ENCODE measurements at regions of chr7 and their contacts with region 1.

Region 1: DNA sequence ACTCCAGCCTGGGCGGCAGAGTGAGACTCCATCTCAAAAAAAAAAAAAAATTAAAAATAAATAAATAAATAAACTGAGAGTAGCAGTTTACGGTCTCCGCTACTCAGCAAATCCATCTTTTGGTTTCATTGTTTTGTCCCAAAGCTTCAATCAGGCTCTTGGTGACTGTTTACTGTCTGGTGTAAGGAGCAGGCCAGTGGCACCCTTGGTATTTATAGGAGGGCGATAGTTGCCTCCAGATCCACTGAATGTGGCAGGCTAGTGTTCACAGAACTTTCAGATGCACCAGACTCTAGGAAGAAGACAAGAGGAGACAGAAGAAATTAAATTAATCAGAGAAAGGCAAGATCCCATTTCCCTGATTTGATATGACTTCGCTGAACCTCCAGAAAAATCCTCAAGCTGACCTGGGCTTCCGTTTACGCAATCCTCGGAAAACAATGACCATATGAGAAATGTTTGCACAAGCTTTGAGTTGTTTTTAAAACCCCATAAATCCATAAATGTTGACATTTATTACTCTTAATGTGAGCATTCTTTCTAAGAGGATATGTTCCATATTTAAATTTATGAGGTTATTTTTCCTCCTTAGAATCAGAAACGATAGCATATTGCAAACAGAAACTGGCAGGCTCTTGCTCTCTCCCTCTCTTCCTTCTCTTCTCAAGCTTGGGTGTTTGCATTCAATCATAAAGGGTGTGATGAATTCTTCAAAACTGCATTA is 7.1 kb upstream of the MUC3A start:
- DNase-seq: peak; percentile 93
- ATAC-seq: peak; percentile 94
- H3K4me3 ChIP-seq: peak overlapping the region; percentile 29; the same call in 1 of the 2 replicates
- H3K27ac ChIP-seq: peak overlapping the region; percentile 83
- H3K4me1 ChIP-seq: peaks cover 12% of the 10 kb centered on the region
- H3K27me3 ChIP-seq: no peaks in the 10 kb centered on the region
- CTCF ChIP-seq: no peak

Region 2: DNA sequence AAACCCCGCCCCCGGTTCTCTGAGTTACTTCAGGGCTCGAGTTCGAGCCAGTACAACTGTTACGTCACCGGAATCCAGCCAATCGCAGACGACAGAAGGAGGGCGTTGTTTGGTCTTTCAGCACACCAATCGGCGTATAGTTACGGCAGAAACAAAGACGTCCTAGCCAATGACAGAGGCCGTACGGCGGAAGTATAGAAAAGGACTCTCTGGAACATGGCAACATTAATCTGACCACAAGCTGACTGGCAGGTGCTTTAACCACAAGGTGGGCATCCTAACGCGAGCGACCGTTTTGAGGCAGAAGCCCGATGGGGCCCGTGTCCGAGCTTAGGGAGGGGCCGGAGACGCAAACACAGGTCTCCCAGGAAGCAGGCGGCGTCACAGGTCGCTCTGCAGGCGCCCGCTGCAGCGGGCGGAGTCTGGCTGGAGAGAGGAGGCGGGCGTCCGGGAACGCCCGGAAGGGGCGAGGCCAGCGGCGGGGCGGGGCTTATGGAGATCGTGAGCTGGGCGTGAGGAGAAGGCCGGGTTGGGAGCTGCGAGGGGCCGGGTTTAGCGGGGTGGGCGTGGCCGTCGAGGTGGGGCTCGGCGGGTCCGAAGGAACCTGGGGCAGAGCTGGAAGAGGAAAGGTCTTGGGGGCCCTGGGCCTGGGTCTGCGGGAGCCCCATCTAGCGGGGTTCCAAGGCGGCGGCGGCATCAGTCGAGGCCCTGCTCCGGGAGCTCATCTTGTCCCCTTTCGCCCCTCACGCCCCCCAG is 330.1 kb before region 1 on chr7 and contains the start of gene MOSPD3:
- CTCF ChIA-PET with region 1: no interaction called
- POLR2A ChIA-PET with region 1: interaction called, 11 read pairs
- intact Hi-C with region 1: no loop called
- DNase-seq: peak; percentile 99
- ATAC-seq: peak; percentile 96
- H3K4me3 ChIP-seq: peak within 1 kb of the TSS; percentile 70
- H3K27ac ChIP-seq: peak within 1 kb of the TSS; percentile 23; the same call in 1 of the 2 replicates
- H3K4me1 ChIP-seq: peaks cover 7% of the 10 kb centered on the region; the same call in 1 of the 2 replicates
- H3K27me3 ChIP-seq: no peaks in the 10 kb centered on the region
- CTCF ChIP-seq: no peak
- total RNA-seq, gene MOSPD3: 9.4 and 19.4 TPM in 2 replicates

Region 3: DNA sequence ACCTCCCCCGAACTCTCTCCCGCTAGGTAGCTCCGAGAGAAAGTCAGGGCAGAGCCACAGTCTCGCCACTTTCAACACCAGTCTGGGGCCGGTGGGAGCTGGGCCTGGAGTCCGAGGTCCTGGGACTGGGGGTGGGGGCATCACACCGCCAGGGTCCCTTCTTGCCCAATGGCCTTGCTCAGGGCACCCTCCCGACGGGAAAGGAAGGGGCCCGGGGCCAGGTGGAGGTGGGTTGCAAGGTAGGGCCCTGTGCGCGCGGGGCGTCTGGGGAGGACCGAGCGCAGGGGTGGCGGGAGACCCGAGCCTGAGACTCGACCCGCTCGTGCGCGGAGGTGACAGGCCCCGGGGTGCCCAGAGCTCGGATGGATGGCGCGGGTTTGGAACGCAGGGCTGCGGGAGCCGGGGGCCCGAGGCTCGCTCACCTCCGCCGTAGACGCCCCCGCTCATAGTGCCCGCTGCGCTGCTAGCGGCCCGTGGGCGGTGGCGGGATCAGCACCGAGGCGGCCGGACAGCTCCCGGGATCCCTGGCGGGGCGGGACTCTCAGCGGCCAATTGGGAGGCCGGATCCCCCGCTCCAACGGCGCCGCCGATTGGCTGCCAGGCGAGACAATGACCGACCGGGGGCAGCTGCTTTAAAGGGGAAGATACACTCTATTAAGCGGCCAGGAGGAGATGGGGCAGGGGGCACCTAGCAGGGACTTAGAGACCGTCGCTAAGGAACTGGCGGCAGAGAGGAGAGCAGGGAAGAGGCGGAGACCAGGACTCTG is 286.1 kb before region 1 on chr7 and contains the start of gene ACTL6B:
- CTCF ChIA-PET with region 1: no interaction called
- POLR2A ChIA-PET with region 1: no interaction called
- intact Hi-C with region 1: no loop called
- DNase-seq: no peak
- ATAC-seq: peak; percentile 18; the same call in 1 of the 2 replicates
- H3K4me3 ChIP-seq: no peak within 1 kb of the TSS
- H3K27ac ChIP-seq: no peak within 1 kb of the TSS
- H3K4me1 ChIP-seq: no peaks in the 10 kb centered on the region
- H3K27me3 ChIP-seq: no peaks in the 10 kb centered on the region
- CTCF ChIP-seq: no peak
- total RNA-seq, gene ACTL6B: not detected in 2 replicates

Region 4: GRCh38 chr7:100852048-100852872 is 89.9 kb before region 1 on chr7 and contains the start of gene SLC12A9:
- CTCF ChIA-PET with region 1: no interaction called
- POLR2A ChIA-PET with region 1: no interaction called
- intact Hi-C with region 1: no loop called
- DNase-seq: peak; percentile 85
- ATAC-seq: peak; percentile 98
- H3K4me3 ChIP-seq: peak within 1 kb of the TSS; percentile 96
- H3K27ac ChIP-seq: peak within 1 kb of the TSS; percentile 79
- H3K4me1 ChIP-seq: peaks cover 12% of the 10 kb centered on the region; the same call in 1 of the 2 replicates
- H3K27me3 ChIP-seq: no peaks in the 10 kb centered on the region
- CTCF ChIP-seq: peak; percentile 91
- total RNA-seq, gene SLC12A9: 25.9 and 31.2 TPM in 2 replicates

Region 5: GRCh38 chr7:100874577-100875355 is 67.4 kb before region 1 on chr7 and contains the start of gene SRRT:
- CTCF ChIA-PET with region 1: no interaction called
- POLR2A ChIA-PET with region 1: interaction called, 13 read pairs
- intact Hi-C with region 1: no loop called
- DNase-seq: peak; percentile 97
- ATAC-seq: peak; percentile 97
- H3K4me3 ChIP-seq: peak within 1 kb of the TSS; percentile 78
- H3K27ac ChIP-seq: peak within 1 kb of the TSS; percentile 76
- H3K4me1 ChIP-seq: peaks cover 27% of the 10 kb centered on the region
- H3K27me3 ChIP-seq: no peaks in the 10 kb centered on the region
- CTCF ChIP-seq: no peak
- total RNA-seq, gene SRRT: 177 and 268 TPM in 2 replicates

Region 6: DNA sequence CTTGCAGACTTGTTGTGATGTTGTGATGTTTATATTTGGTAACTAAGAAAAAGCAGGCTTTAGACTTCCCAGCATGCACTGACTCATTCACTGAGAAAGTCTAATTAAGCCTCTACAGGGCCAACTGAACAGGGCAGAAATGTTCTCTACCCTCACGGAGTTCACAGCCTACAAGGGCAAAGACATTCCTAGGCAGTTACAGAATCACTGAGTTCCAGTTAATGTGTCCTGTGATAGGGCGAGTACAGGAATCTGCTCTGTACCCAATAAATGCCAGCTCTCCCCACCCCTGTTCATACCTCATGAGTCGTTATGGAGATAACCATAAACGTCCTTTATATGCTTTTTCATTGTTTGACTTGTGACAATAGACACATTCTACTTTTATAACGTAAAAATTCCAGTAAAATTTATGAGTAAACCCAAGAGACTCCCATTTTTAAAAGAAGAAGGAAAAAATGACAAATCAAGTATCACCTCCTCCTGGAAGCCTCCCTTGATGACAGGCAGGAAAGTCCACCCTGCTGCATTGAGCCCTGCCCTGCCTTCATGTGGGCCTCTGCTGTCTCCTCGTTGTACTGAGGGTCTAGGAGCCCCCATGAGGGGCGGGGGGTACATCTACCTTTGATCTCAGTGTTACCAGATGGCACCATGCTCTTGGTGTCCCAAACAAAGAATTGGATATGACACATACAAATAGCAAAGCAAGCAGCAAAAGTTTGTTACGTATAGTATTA is 41.4 kb after region 1 on chr7:
- CTCF ChIA-PET with region 1: no interaction called
- POLR2A ChIA-PET with region 1: interaction called, 4 read pairs
- intact Hi-C with region 1: loop called (anchors 1 kb)
- DNase-seq: peak; percentile 87
- ATAC-seq: peak; percentile 91
- H3K4me3 ChIP-seq: no peak overlapping the region
- H3K27ac ChIP-seq: peak overlapping the region; percentile 91
- H3K4me1 ChIP-seq: peaks cover 27% of the 10 kb centered on the region
- H3K27me3 ChIP-seq: no peaks in the 10 kb centered on the region
- CTCF ChIP-seq: no peak

Region 7: DNA sequence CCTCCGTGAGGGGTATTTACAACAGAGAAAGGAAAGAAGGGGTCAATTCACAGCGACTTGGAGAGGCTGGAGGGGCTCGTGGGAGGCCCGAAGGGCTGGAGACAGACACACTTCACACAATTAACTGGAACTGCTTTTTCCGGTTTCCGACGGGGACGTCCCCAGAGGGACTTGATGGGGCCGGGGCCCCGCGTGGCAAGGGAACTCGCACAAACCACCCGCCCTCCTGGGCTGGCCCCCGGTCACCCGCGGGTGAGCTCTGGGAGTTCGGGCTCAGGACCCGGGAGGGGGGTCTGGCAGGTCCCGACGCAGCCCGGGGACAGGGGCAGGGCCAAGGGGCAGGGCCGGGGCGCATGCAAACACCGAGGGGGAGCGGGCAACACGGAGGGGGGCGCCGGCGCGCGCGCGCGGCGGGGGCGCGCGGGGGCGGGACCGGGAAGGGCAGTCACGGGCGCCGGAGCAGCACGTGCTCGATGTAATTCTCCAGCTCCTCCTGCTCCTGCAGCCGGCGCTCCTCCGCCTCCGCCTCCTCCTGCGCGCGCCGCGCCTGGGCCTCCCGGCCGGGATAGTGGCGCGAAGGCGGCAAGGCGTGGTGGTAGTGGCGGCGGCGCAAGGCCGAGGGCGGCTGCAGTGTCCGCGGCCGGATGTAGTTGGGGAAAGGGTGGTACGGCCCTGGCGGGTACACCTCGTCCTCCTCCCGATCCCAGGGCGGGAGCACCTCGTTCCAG is 220.5 kb after region 1 on chr7:
- CTCF ChIA-PET with region 1: no interaction called
- POLR2A ChIA-PET with region 1: interaction called, 17 read pairs
- intact Hi-C with region 1: no loop called
- DNase-seq: peak; percentile 56
- ATAC-seq: peak; percentile 38
- H3K4me3 ChIP-seq: peak overlapping the region; percentile 53; the same call in 1 of the 2 replicates
- H3K27ac ChIP-seq: peak overlapping the region; percentile 58
- H3K4me1 ChIP-seq: peaks cover 55% of the 10 kb centered on the region
- H3K27me3 ChIP-seq: peaks cover 26% of the 10 kb centered on the region
- CTCF ChIP-seq: no peak

Measured in PC-3 (cell line).